Gastrocnemius medialis (tissue), 4 donors: ENCODE measurements at regions of chr16 and their contacts with region 1.

Region 1: GRCh38 chr16:25111403-25112166 is at the start of gene LCMT1:
- DNase-seq: peak; percentile 92 to 96
- ATAC-seq: peak; percentile 91 to 97
- H3K4me3 ChIP-seq: peak within 1 kb of the TSS; percentile 71 to 93 (median 89)
- H3K27ac ChIP-seq: peak within 1 kb of the TSS; percentile 84 to 96 (median 90)
- H3K4me1 ChIP-seq: peaks cover 36% of the 10 kb centered on the region in 2 donors
- H3K27me3 ChIP-seq: no peaks in the 10 kb centered on the region
- CTCF ChIP-seq: no peak
- POLR2A ChIP-seq: peak; percentile 68 to 71
- total RNA-seq, gene LCMT1: 49.8 to 90.6 (median 59.3) TPM

Region 2: GRCh38 chr16:24539291-24539849 is 572.2 kb before region 1 on chr16 and contains the start of gene RBBP6:
- in situ Hi-C with region 1: loop called in 2 of 4 experiments (anchors 10 to 25 kb)
- intact Hi-C with region 1: loop called (anchors 2 kb)
- DNase-seq: peak; percentile 89 to 94
- ATAC-seq: peak; percentile 92 to 93
- H3K4me3 ChIP-seq: peak within 1 kb of the TSS; percentile 78 to 97 (median 86)
- H3K27ac ChIP-seq: peak within 1 kb of the TSS; percentile 97 to 100 (median 99)
- H3K4me1 ChIP-seq: peaks cover 26 to 36% of the 10 kb centered on the region in 2 donors
- H3K27me3 ChIP-seq: no peaks in the 10 kb centered on the region
- CTCF ChIP-seq: peak in 2 of 5 experiments; percentile 32 to 38
- POLR2A ChIP-seq: peak; percentile 100
- total RNA-seq, gene RBBP6: 33.3 to 57.1 (median 47.8) TPM

Region 3: GRCh38 chr16:24962747-24963146 is 148.8 kb before region 1 on chr16:
- in situ Hi-C with region 1: no loop called
- intact Hi-C with region 1: no loop called
- DNase-seq: no peak
- ATAC-seq: no peak
- H3K4me3 ChIP-seq: no peak overlapping the region
- H3K27ac ChIP-seq: no peak overlapping the region
- H3K4me1 ChIP-seq: no peaks in the 10 kb centered on the region
- H3K27me3 ChIP-seq: no peaks in the 10 kb centered on the region
- CTCF ChIP-seq: no peak
- POLR2A ChIP-seq: no peak

Region 4: DNA sequence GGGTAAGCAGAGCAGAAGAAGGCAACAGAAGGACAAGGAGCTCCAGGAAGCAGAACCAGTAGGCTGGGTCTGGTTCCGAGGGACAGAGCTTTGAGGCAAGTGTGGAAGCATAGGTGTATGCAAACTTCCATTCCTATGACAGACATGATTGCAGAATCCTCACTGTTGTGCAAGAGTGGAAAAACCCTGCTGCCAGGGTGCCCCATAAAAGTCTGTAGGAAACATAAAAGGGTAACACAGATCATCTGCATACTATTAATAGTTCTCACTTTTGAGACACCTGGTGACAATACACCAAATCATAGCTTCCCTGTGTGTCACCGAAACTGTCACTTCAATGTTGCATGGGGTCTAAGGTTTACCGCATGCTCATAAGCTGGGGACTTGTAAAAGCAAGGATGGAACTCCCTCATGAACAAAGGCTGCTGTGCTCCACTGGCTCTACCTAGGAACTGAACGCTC is 136.1 kb before region 1 on chr16:
- in situ Hi-C with region 1: no loop called
- intact Hi-C with region 1: loop called (anchors 1 kb)
- DNase-seq: peak in 1 of 2 donors; percentile 72
- ATAC-seq: peak; percentile 78 to 84
- H3K4me3 ChIP-seq: no peak overlapping the region
- H3K27ac ChIP-seq: peak overlapping the region; percentile 67 to 89 (median 78)
- H3K4me1 ChIP-seq: peaks cover 68 to 81% of the 10 kb centered on the region in 2 donors
- H3K27me3 ChIP-seq: no peaks in the 10 kb centered on the region
- CTCF ChIP-seq: no peak
- POLR2A ChIP-seq: no peak

Region 5: GRCh38 chr16:25051406-25052150 is 60.0 kb before region 1 on chr16:
- in situ Hi-C with region 1: loop called in 2 of 4 experiments (anchors 5 to 10 kb)
- intact Hi-C with region 1: loop called (anchors 1 kb)
- DNase-seq: no peak
- ATAC-seq: peak; percentile 13 to 28
- H3K4me3 ChIP-seq: peak overlapping the region; percentile 2 to 37 (median 32)
- H3K27ac ChIP-seq: peak overlapping the region; percentile 63 to 93 (median 78)
- H3K4me1 ChIP-seq: peaks cover 25 to 27% of the 10 kb centered on the region in 2 donors
- H3K27me3 ChIP-seq: no peaks in the 10 kb centered on the region
- CTCF ChIP-seq: no peak
- POLR2A ChIP-seq: no peak

Region 6: GRCh38 chr16:25066747-25067631 is 44.6 kb before region 1 on chr16:
- in situ Hi-C with region 1: loop called in 1 of 4 experiments (anchors 5 kb)
- intact Hi-C with region 1: loop called (anchors 1 kb)
- DNase-seq: peak; percentile 65 to 79
- ATAC-seq: peak; percentile 91 to 94
- H3K4me3 ChIP-seq: peak overlapping the region; percentile 75 to 99 (median 91)
- H3K27ac ChIP-seq: peak overlapping the region; percentile 87 to 96 (median 94)
- H3K4me1 ChIP-seq: peaks cover 14 to 15% of the 10 kb centered on the region in 2 donors
- H3K27me3 ChIP-seq: no peaks in the 10 kb centered on the region
- CTCF ChIP-seq: peak in 1 of 5 experiments; percentile 23
- POLR2A ChIP-seq: peak; percentile 78 to 80